Ascending aorta (tissue), 2 donors: ENCODE measurements at regions of chr7 and their contacts with region 1.

Region 1: DNA sequence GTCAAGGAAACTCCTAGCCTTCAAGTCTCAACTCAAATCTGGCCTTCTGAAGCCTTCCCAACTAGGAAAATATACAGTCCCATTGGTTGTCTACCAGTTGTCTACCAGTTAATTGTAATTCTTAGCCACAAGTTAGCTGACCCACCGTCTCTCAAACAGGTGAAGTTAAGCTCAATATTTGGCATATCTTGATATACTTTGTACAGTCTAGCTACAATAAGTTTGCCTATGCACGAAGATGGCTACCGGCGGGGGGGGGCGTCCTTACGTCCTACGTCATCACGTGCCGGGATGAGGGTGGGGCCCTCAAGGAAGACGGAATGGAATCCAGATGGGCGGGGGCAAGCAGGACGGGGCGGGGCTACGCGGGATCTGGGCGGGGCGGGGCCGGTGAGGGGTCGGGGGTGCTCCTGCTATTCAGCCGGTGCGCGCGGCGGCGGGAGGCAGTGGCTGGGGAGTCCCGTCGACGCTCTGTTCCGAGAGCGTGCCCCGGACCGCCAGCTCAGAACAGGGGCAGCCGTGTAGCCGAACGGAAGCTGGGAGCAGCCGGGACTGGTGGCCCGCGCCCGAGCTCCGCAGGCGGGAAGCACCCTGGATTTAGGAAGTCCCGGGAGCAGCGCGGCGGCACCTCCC is at the start of gene AHR:
- DNase-seq: peak; percentile 80 to 97
- H3K4me3 ChIP-seq: peak within 1 kb of the TSS; percentile 99 to 100
- H3K27ac ChIP-seq: peak within 1 kb of the TSS; percentile 97 to 98
- H3K4me1 ChIP-seq: peaks cover 0 to 12% of the 10 kb centered on the region in 2 donors
- H3K27me3 ChIP-seq: no peaks in the 10 kb centered on the region
- CTCF ChIP-seq: no peak
- total RNA-seq, gene AHR: 149 TPM

Region 2: DNA sequence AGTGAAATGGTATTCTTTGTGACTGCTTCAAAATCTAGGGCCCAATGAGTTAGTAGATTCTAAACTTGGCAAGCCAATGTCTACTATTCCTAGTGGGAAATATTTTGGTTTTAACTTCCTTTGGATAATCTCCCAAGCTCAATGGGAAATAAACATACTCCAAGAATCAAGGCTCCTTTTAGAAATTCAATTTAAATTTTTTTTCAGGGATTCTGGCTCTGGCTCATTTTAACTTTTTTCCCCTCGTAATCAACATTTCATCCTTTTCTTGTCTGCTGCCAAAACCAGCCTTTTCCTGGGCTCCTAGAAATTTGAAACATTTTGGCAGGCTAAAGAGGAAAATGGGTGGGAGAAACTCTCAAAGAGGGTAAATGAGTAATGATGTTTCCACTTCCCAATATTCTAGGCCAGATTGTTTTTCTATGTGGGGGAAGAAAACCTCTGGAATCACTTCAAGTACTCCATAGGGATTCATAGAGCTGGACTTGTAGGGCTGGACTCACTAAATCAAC is 331.0 kb before region 1 on chr7:
- intact Hi-C with region 1: loop called (anchors 5 kb)
- DNase-seq: no peak
- H3K4me3 ChIP-seq: no peak overlapping the region
- H3K27ac ChIP-seq: peak overlapping the region; percentile 53 to 56
- H3K4me1 ChIP-seq: peaks cover 0 to 7% of the 10 kb centered on the region in 2 donors
- H3K27me3 ChIP-seq: no peaks in the 10 kb centered on the region
- CTCF ChIP-seq: no peak

Region 3: DNA sequence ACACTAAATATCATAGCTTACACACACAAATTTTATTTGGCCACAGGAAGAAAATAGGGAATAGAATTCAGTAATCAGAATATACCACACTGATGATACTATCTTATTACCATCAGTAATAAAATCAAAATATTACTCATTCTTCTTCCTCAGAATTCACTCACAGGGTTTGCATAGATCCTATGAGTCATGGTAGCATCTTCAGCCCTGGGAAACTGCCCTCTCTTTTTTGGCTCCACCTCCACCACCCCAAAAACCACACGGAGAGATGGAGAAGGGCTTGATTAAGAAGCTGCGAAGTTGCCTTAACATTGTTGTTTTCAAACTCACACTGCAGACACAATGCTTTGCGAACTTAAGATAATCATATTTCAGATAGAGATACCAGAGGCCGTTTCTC is 154.0 kb before region 1 on chr7:
- intact Hi-C with region 1: loop called (anchors 10 kb)
- DNase-seq: no peak
- H3K4me3 ChIP-seq: no peak overlapping the region
- H3K27ac ChIP-seq: no peak overlapping the region
- H3K4me1 ChIP-seq: peaks cover 0 to 7% of the 10 kb centered on the region in 2 donors
- H3K27me3 ChIP-seq: no peaks in the 10 kb centered on the region
- CTCF ChIP-seq: no peak

Region 4: GRCh38 chr7:17185690-17186070 is 112.6 kb before region 1 on chr7:
- intact Hi-C with region 1: no loop called
- DNase-seq: no peak
- H3K4me3 ChIP-seq: no peak overlapping the region
- H3K27ac ChIP-seq: no peak overlapping the region
- H3K4me1 ChIP-seq: peaks cover 0 to 3% of the 10 kb centered on the region in 2 donors
- H3K27me3 ChIP-seq: no peaks in the 10 kb centered on the region
- CTCF ChIP-seq: no peak

Region 5: GRCh38 chr7:17212188-17212587 is 86.1 kb before region 1 on chr7:
- intact Hi-C with region 1: no loop called
- DNase-seq: no peak
- H3K4me3 ChIP-seq: no peak overlapping the region
- H3K27ac ChIP-seq: no peak overlapping the region
- H3K4me1 ChIP-seq: no peaks in the 10 kb centered on the region
- H3K27me3 ChIP-seq: no peaks in the 10 kb centered on the region
- CTCF ChIP-seq: no peak

Region 6: DNA sequence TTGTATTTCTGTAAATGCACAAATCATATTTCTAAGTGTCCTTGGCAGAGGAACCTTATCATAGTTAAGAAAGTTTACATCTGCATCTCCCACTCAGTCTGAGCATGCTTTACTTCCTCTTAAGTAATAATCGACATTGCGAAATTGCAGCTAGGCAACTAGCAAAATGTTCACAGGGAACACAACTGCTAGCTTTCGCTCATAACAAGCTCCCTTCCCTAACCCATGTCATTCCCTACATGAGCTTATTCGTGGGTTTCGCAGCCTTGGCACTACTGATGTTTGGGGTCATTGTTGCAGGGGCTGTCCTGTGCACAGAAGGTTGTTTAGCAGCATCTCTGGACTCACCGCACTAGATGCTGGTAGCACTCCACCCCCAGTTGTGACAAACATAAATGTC is 71.8 kb after region 1 on chr7:
- intact Hi-C with region 1: loop called (anchors 5 kb)
- DNase-seq: no peak
- H3K4me3 ChIP-seq: no peak overlapping the region
- H3K27ac ChIP-seq: peak overlapping the region; percentile 60 to 71
- H3K4me1 ChIP-seq: peaks cover 0 to 44% of the 10 kb centered on the region in 2 donors
- H3K27me3 ChIP-seq: no peaks in the 10 kb centered on the region
- CTCF ChIP-seq: no peak

Region 7: DNA sequence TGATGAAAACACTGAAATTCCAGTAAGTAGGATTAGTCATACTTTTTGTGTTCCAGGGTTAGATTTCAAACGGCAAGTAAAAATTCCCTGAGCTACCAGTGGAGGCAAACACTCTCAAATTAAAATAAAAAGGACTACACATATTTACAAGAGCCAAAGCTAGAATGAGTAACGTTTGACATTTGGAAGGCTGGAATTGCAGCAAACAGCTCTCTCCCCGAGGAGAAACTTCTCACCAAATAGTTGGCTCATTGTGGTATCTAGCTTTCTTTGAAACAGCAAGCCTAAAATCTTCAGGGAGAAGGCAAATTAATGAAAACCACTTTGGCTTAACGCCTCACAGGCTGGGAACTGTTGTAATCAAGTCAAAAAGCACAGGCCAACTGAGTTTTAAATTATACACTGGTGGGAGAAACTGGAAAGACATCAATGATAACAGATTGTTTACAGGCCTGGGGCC is 353.6 kb after region 1 on chr7:
- intact Hi-C with region 1: loop called (anchors 5 kb)
- DNase-seq: no peak
- H3K4me3 ChIP-seq: no peak overlapping the region
- H3K27ac ChIP-seq: peak overlapping the region; percentile 54 to 73
- H3K4me1 ChIP-seq: peaks cover 0 to 14% of the 10 kb centered on the region in 2 donors
- H3K27me3 ChIP-seq: no peaks in the 10 kb centered on the region
- CTCF ChIP-seq: peak; percentile 16 to 40 (median 35)